Cardiac septum (tissue), 1 donor: ENCODE measurements at regions of chr13 and their contacts with region 1.

Region 1: DNA sequence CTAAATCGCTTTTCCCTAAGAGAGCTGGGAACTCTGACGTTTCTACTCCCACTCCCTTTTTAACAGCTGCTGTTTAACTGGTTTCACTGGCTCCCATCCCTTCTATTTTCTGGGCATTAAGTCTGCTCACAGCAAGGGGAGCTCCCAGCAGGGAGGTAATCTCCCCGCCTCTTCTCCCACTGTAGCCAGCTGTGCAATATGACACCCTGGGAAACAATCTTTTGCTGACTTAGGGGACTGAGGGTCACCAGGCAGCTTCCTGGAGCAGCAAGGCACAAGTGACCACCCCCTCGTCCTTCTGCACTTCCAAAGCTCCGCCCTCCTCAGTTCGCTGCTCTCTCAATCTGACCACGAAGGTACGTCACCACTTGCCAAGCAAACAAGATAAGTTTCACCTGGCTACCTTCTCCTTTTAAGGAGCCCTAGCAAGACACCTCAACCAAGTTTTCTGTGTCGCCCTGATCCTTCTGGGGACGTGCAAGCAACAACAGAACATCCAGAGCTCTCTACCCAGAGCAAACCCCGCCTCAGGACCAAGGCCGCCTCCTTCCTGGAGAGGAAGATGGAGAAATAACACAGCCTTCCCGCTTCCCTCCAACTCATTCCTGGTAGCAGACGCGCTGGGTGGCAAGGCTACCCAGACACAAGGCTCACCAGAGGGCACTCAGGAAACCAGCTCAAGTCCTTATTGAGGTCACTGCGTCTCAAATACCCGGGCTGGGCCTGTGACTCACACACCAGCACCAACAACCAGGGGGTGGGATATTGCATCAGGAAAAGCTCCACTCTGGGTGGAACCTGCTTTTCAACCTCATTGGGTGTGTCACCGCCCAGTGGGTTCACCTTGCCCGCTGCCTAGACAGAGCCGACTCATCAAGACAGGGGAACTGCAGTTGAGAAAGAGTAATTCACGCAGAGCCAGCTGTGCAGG is 92.4 kb downstream of the STK24 start:
- DNase-seq: peak; percentile 82

Region 2: GRCh38 chr13:98254513-98254912 is 230.0 kb before region 1 on chr13:
- intact Hi-C with region 1: no loop called
- DNase-seq: no peak

Region 3: GRCh38 chr13:98503175-98504030 is 18.8 kb after region 1 on chr13:
- intact Hi-C with region 1: loop called (anchors 2 kb)
- DNase-seq: no peak